T-cell (primary cell): ENCODE measurements at regions of chr7 and their contacts with region 1.

Region 1: DNA sequence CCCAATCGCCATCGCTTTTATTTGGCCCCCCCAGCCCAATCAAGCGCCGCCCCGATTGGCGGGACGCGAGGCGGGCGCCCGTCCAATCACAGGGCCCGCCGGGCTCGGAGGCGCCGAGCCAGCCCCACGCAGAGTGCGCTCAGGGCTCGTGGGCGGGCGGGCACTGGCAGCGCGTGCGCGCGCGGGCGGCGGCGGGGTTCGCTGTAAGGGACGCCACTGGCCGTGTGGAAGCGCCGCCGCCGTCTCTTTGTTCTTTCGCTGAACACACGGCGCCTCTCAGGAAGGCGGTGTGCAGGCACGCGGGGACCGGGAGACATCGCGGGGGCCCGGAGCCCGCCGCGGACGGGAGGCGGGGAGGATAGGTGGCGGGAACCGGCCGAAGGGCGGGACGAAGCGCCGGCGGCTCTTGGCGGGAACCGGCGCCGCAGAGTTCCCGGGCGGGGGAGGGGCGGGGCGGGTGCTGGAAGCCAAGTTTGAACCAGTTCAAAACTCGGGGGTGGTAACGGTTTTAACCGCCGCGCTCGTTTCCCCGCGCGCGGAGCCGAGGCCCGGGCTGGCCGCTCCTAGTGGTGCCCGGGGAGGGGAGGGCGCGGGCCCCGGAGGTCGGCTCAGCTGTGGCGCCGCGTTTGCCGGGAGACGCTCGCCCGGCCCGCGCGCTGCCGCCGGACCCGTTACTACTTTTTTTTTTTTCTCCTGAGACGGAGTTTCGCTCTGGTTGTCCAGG is 370 bp upstream of the EZH2 start:
- DNase-seq: peak; percentile 83 to 96 (median 91)
- ATAC-seq: peak; percentile 89 to 95 (median 92)
- H3K4me3 ChIP-seq: peak overlapping the region; percentile 68 to 83
- H3K4me3 Mint-ChIP-seq: peak overlapping the region; percentile 86 to 95 (median 88)
- H3K27ac ChIP-seq: peak overlapping the region; percentile 69
- H3K27ac Mint-ChIP-seq: peak overlapping the region; percentile 86 to 89
- H3K4me1 ChIP-seq: peaks cover 9 to 13% of the 10 kb centered on the region in 2 experiments
- H3K4me1 Mint-ChIP-seq: peaks cover 16 to 35% (median 22%) of the 10 kb centered on the region in 3 donors
- H3K27me3 ChIP-seq: peaks cover 0 to 4% of the 10 kb centered on the region in 2 experiments
- H3K27me3 Mint-ChIP-seq: no peaks in the 10 kb centered on the region

Region 2: GRCh38 chr7:148856891-148857290 is 27.6 kb before region 1 on chr7:
- CTCF ChIA-PET with region 1: interaction called in 1 of 2 experiments, 11 read pairs
- POLR2A ChIA-PET with region 1: interaction called, 3 to 10 read pairs
- DNase-seq: peak in 1 of 35 experiments; percentile 15
- ATAC-seq: no peak
- H3K4me3 ChIP-seq: no peak overlapping the region
- H3K4me3 Mint-ChIP-seq: no peak overlapping the region
- H3K27ac ChIP-seq: no peak overlapping the region
- H3K27ac Mint-ChIP-seq: no peak overlapping the region
- H3K4me1 ChIP-seq: peaks cover 0 to 3% of the 10 kb centered on the region in 2 experiments
- H3K4me1 Mint-ChIP-seq: peaks cover 10 to 21% (median 11%) of the 10 kb centered on the region in 3 donors
- H3K27me3 ChIP-seq: no peaks in the 10 kb centered on the region
- H3K27me3 Mint-ChIP-seq: no peaks in the 10 kb centered on the region